MCF 10A (cell line): ENCODE measurements at regions of chr11 and their contacts with region 1.

Region 1: DNA sequence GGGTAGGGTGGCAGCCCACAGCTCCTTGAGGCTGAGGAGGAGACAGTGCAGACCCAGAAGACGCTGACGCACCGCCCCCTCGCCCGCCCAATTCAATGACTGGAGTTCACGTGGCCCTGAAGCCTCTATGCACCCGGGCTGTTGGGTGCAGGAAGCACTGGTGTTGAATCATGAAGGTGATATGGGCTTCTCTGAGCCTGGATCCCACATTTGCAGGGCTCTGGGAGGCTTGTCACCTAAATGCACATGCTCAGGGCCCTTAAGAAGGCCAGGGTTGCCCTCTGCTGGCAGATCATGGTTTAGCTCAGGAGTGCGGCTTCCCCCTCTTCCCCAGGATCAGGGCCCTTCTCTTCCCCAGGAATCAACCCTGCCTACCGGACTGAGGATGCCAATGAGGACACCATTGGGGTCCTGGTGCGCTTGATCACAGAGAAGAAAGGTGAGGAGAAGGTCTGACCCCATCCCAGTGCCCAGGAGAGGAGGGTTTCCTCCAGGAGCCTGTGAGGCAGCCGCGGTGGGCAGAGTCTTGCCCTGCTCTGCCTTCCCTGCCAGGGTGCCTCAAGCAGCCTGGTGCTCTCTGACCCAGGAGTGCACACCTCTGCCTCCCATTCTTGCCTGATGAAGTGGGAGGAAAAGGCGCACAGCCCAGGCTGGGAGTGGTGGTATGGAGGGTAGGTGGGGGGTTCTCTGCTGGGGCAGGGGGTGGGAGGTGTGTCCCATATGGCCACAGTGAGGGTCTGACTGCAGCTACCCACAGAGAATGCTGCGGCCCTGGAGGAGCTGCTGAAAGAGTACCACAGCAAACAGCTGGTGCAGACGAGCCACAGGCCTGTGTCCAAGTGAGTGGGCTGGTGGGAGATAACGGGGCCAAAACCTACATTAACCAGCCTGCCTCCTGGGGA is 17.5 kb downstream of the RELT start:
- DNase-seq: peak; percentile 78
- H3K4me3 Mint-ChIP-seq: no peak overlapping the region
- H3K27ac Mint-ChIP-seq: no peak overlapping the region
- H3K4me1 Mint-ChIP-seq: peaks cover 14% of the 10 kb centered on the region
- H3K27me3 Mint-ChIP-seq: no peaks in the 10 kb centered on the region
- CTCF ChIP-seq: peak; percentile 55

Region 2: GRCh38 chr11:73295231-73295995 is 98.3 kb before region 1 on chr11:
- CTCF ChIA-PET with region 1: interaction called, 3 read pairs
- POLR2A ChIA-PET with region 1: no interaction called
- intact Hi-C with region 1: loop called (anchors 1 kb)
- DNase-seq: peak; percentile 80
- H3K4me3 Mint-ChIP-seq: no peak overlapping the region
- H3K27ac Mint-ChIP-seq: no peak overlapping the region
- H3K4me1 Mint-ChIP-seq: peaks cover 5% of the 10 kb centered on the region
- H3K27me3 Mint-ChIP-seq: no peaks in the 10 kb centered on the region
- CTCF ChIP-seq: peak; percentile 88